ENCODE measurements at regions of chr3 and their contacts with region 1.

Region 1: GRCh38 chr3:37308247-37308646 is 133.9 kb upstream of the LRRFIP2 start:
- DNase-seq: peak; percentile 7
- ATAC-seq: no peak
- H3K4me3 ChIP-seq: no peak overlapping the region
- H3K27ac ChIP-seq: no peak overlapping the region
- H3K4me1 ChIP-seq: no peaks in the 10 kb centered on the region
- H3K27me3 ChIP-seq: no peaks in the 10 kb centered on the region
- CTCF ChIP-seq: peak; percentile 11 to 56 (median 29); a peak in 3 of 6 replicates
- POLR2A ChIP-seq: no peak
- RAD21 ChIP-seq: peak; percentile 33

Region 2: GRCh38 chr3:37779289-37780152 is 471.3 kb after region 1 on chr3:
- CTCF ChIA-PET with region 1: interaction called, 6 read pairs
- POLR2A ChIA-PET with region 1: no interaction called
- RAD21 ChIA-PET with region 1: no interaction called
- intact Hi-C with region 1: loop called (anchors 5 kb)
- DNase-seq: peak; percentile 69
- ATAC-seq: peak; percentile 90
- H3K4me3 ChIP-seq: no peak overlapping the region
- H3K27ac ChIP-seq: no peak overlapping the region
- H3K4me1 ChIP-seq: no peaks in the 10 kb centered on the region
- H3K27me3 ChIP-seq: peaks cover 5% of the 10 kb centered on the region; the same call in 1 of the 2 replicates
- CTCF ChIP-seq: peak; percentile 63 to 86 (median 83); a peak in 5 of 6 replicates
- POLR2A ChIP-seq: no peak
- RAD21 ChIP-seq: peak; percentile 76

Measured in HCT116 (cell line).